ENCODE measurements at regions of chr7 and their contacts with region 1.

Region 1: GRCh38 chr7:96075510-96076349 is 246.2 kb downstream of the SLC25A13 start:
- DNase-seq: peak; percentile 71
- ATAC-seq: peak; percentile 85
- H3K4me3 ChIP-seq: peak overlapping the region; percentile 73
- H3K27ac ChIP-seq: no peak overlapping the region
- H3K4me1 ChIP-seq: peaks cover 17% of the 10 kb centered on the region
- H3K27me3 ChIP-seq: no peaks in the 10 kb centered on the region
- CTCF ChIP-seq: peak; percentile 90

Region 2: DNA sequence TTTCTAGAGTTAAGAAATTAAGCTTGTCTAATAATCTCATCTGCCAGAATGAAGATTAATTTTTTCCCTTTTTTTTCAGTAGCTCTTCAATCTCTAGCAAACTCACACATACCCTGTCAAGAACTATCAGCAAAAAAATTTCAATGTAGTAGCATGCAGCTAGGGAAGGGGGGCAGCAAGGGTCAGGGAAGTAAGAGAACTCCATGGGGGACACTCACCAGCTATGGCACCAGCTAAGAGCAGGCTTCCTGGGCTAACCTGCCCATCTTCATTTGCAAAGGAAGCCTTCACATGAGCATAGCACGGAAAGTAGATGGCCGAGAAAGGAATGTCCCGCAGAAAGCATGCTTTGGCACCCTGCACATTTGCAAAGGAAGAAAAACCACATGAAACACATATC is 55.8 kb after region 1 on chr7:
- CTCF ChIA-PET with region 1: no interaction called
- POLR2A ChIA-PET with region 1: no interaction called
- intact Hi-C with region 1: loop called (anchors 5 kb)
- DNase-seq: no peak
- ATAC-seq: no peak
- H3K4me3 ChIP-seq: no peak overlapping the region
- H3K27ac ChIP-seq: no peak overlapping the region
- H3K4me1 ChIP-seq: peaks cover 13% of the 10 kb centered on the region
- H3K27me3 ChIP-seq: no peaks in the 10 kb centered on the region
- CTCF ChIP-seq: no peak

Region 3: DNA sequence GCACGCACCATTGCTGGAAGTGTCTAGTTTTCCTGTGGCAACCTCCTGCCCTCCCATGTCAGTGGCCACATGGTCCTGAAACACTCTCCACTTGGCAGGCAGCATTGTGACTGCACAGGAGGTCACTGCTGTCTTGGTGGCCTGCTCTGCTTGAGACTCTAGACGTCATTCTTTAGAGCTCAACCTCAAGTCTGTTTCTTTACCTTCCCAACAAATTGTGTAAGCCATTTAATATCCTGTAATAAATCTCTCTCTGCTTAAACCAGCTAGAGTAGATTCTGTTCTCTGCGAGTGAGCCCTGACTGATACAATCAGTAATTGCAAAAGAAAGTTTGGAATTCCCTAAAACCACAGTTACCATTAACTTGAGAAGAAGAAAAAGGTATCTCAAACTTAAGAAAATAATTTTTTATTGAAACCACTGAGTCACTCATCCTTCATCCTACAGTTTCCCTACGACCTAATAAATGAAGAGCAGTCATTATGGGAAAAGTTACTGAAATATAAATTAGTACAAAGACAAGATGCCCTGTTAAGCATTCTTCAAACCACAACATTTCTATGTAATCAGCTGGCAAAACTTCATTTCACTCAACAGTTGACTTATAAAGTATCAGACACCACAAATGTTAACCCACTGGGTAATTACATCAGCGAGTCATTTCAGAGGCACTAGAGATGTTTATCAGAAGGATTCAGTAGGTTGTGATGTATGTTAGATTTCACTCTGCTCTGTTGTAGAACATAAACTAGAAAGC is 228.1 kb after region 1 on chr7:
- CTCF ChIA-PET with region 1: interaction called, 15 read pairs
- POLR2A ChIA-PET with region 1: no interaction called
- intact Hi-C with region 1: loop called (anchors 5 kb)
- DNase-seq: peak; percentile 77
- ATAC-seq: peak; percentile 55
- H3K4me3 ChIP-seq: peak overlapping the region; percentile 12; the same call in 1 of the 2 replicates
- H3K27ac ChIP-seq: peak overlapping the region; percentile 97
- H3K4me1 ChIP-seq: peaks cover 40% of the 10 kb centered on the region
- H3K27me3 ChIP-seq: no peaks in the 10 kb centered on the region
- CTCF ChIP-seq: no peak

Region 4: GRCh38 chr7:96414931-96415292 is 339.2 kb after region 1 on chr7:
- CTCF ChIA-PET with region 1: no interaction called
- POLR2A ChIA-PET with region 1: no interaction called
- intact Hi-C with region 1: loop called (anchors 2 kb)
- DNase-seq: peak; percentile 72
- ATAC-seq: peak; percentile 95
- H3K4me3 ChIP-seq: no peak overlapping the region
- H3K27ac ChIP-seq: no peak overlapping the region
- H3K4me1 ChIP-seq: peaks cover 7% of the 10 kb centered on the region; the same call in 1 of the 2 replicates
- H3K27me3 ChIP-seq: no peaks in the 10 kb centered on the region
- CTCF ChIP-seq: peak; percentile 90